HepG2 (cell line): ENCODE measurements at regions of chr19 and their contacts with region 1.

Region 1: GRCh38 chr19:12965017-12965811 is 4.2 kb upstream of the DAND5 start:
- DNase-seq: peak; percentile 72
- ATAC-seq: peak; percentile 93
- H3K4me3 ChIP-seq: peak overlapping the region; percentile 32 to 66 (median 42)
- H3K27ac ChIP-seq: peak overlapping the region; percentile 43
- H3K4me1 ChIP-seq: peaks cover 11% of the 10 kb centered on the region
- H3K27me3 ChIP-seq: 0 out of 5 replicates have a peak, but pooled peaks cover 0 to 3% of the 10 kb centered on the region in 2 experiments
- CTCF ChIP-seq: peak; percentile 85
- EP300 ChIP-seq: no peak; a peak in 1 of 4 replicates
- POLR2A ChIP-seq: no peak
- RAD21 ChIP-seq: peak; percentile 89

Region 2: DNA sequence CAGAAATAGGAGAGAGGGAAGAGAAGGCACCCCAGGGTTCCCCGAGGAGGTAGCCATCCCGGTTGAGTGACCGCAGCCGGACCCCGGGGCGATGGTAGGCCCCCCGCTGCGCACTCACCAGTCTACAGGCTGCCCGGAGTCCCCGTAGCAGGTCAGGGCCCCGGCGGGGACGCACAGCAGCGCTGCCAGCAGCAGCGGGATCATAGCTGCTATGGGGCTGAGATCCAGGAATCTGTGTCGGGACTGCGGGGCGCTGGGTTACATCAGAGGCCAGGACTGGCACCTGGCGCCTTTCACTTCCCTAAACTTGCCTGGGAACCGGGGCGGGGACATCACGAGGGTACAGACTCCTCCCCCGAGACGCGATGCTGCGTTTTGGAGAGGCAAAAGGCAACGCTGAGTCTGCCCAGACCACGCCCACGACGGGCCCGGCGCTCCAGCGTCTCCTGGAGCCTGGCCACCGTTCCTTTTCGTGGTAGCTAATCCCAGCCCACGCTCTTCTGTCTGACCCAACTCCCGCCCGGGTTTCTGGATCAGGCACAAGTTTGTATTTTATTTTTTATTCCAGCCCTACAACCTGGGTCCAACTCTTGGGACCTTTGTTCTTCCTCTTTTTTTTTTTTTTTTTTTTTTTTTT is 83.9 kb before region 1 on chr19 and contains the start of gene DNASE2:
- CTCF ChIA-PET with region 1: interaction called, 10 read pairs
- POLR2A ChIA-PET with region 1: interaction called, 6 read pairs
- in situ Hi-C with region 1: no loop called
- intact Hi-C with region 1: loop called (anchors 1 kb)
- DNase-seq: peak; percentile 61
- ATAC-seq: peak; percentile 65
- H3K4me3 ChIP-seq: peak within 1 kb of the TSS; percentile 51 to 74 (median 60); a peak in 5 of 6 replicates
- H3K27ac ChIP-seq: no peak within 1 kb of the TSS
- H3K4me1 ChIP-seq: peaks cover 22% of the 10 kb centered on the region
- H3K27me3 ChIP-seq: peaks cover 0 to 6% of the 10 kb centered on the region in 2 experiments; a peak in 2 of 5 replicates
- CTCF ChIP-seq: peak; percentile 25; the same call in 1 of the 2 replicates
- EP300 ChIP-seq: no peak
- POLR2A ChIP-seq: peak; percentile 55 to 61; a peak in 3 of 4 replicates
- RAD21 ChIP-seq: no peak
- total RNA-seq, gene DNASE2: 3.4 and 7.5 TPM in 2 replicates

Region 3: GRCh38 chr19:12924616-12925276 is 40.5 kb before region 1 on chr19:
- CTCF ChIA-PET with region 1: no interaction called
- POLR2A ChIA-PET with region 1: no interaction called
- in situ Hi-C with region 1: no loop called
- intact Hi-C with region 1: no loop called
- DNase-seq: no peak
- ATAC-seq: no peak; the same call in 2 of the 3 replicates
- H3K4me3 ChIP-seq: no peak overlapping the region
- H3K27ac ChIP-seq: no peak overlapping the region
- H3K4me1 ChIP-seq: no peaks in the 10 kb centered on the region
- H3K27me3 ChIP-seq: no peaks in the 10 kb centered on the region; a peak in 1 of 5 replicates
- CTCF ChIP-seq: no peak
- EP300 ChIP-seq: no peak
- POLR2A ChIP-seq: no peak
- RAD21 ChIP-seq: no peak

Region 4: DNA sequence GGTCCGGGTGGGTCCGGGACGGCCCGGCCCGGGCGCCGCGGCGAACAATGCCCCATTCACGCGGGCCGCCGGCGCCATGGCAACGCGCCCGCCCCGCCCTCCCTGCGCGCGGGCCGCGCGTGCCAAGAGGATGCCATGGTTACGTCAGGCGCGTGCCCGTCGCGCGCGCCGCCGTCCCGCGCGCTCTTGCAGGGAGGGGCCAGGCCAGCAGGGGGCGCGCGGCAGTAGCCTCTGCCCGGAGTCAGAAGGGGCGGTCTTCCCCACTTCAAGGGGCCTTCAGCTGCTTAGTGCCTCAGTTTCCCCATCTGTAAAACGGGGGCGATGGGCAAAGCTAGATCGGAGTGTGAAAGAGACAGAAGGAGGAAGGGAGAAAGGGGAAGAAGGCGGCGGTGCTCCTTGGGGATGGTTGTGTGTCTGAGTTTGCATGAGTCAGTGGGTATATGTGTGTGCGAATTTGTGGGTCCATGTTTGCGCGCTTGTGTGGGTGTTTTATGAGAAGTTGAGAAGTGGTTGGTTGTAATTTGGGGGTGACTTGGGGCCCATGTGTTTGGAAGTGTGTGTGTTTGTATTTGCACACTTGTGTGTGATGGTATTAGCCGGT is 18.4 kb after region 1 on chr19:
- CTCF ChIA-PET with region 1: no interaction called
- POLR2A ChIA-PET with region 1: no interaction called
- in situ Hi-C with region 1: no loop called
- intact Hi-C with region 1: no loop called
- DNase-seq: peak; percentile 53
- ATAC-seq: peak; percentile 8; the same call in 1 of the 3 replicates
- H3K4me3 ChIP-seq: peak overlapping the region in 2 of 3 experiments; percentile 38 to 47; a peak in 1 of 6 replicates
- H3K27ac ChIP-seq: no peak overlapping the region
- H3K4me1 ChIP-seq: peaks cover 60% of the 10 kb centered on the region
- H3K27me3 ChIP-seq: peaks cover 0 to 5% of the 10 kb centered on the region in 2 experiments; a peak in 1 of 5 replicates
- CTCF ChIP-seq: peak; percentile 91
- EP300 ChIP-seq: peak; percentile 35 to 41; a peak in 2 of 4 replicates
- POLR2A ChIP-seq: no peak
- RAD21 ChIP-seq: peak; percentile 97

Region 5: GRCh38 chr19:13093407-13094105 is 128.3 kb after region 1 on chr19:
- CTCF ChIA-PET with region 1: interaction called, 18 read pairs
- POLR2A ChIA-PET with region 1: interaction called, 3 read pairs
- in situ Hi-C with region 1: no loop called
- intact Hi-C with region 1: no loop called
- DNase-seq: peak; percentile 76
- ATAC-seq: peak; percentile 70
- H3K4me3 ChIP-seq: no peak overlapping the region
- H3K27ac ChIP-seq: no peak overlapping the region
- H3K4me1 ChIP-seq: peaks cover 50% of the 10 kb centered on the region
- H3K27me3 ChIP-seq: no peaks in the 10 kb centered on the region
- CTCF ChIP-seq: peak; percentile 98
- EP300 ChIP-seq: no peak
- POLR2A ChIP-seq: 0 out of 4 replicates have a peak, but pooled peaks of 1 of the 2 experiments have one; percentile 11
- RAD21 ChIP-seq: peak; percentile 93

Region 6: GRCh38 chr19:13122275-13122878 is 157.2 kb after region 1 on chr19:
- CTCF ChIA-PET with region 1: no interaction called
- POLR2A ChIA-PET with region 1: no interaction called
- in situ Hi-C with region 1: no loop called
- intact Hi-C with region 1: no loop called
- DNase-seq: no peak
- ATAC-seq: no peak
- H3K4me3 ChIP-seq: no peak overlapping the region
- H3K27ac ChIP-seq: no peak overlapping the region
- H3K4me1 ChIP-seq: peaks cover 32% of the 10 kb centered on the region
- H3K27me3 ChIP-seq: no peaks in the 10 kb centered on the region
- CTCF ChIP-seq: no peak
- EP300 ChIP-seq: no peak
- POLR2A ChIP-seq: no peak
- RAD21 ChIP-seq: no peak